ENCODE measurements at regions of chr1 and their contacts with region 1.

Region 1: GRCh38 chr1:204506961-204507387 is 9.2 kb upstream of the MDM4 start:
- DNase-seq: peak; percentile 91
- ATAC-seq: peak; percentile 72
- H3K4me3 Mint-ChIP-seq: peak overlapping the region; percentile 89
- H3K27ac Mint-ChIP-seq: peak overlapping the region; percentile 99
- H3K4me1 Mint-ChIP-seq: peaks cover 28% of the 10 kb centered on the region
- H3K27me3 Mint-ChIP-seq: peaks cover 2% of the 10 kb centered on the region

Region 2: GRCh38 chr1:203861379-203862184 is 645.4 kb before region 1 on chr1 and contains the start of gene SNRPE:
- CTCF ChIA-PET with region 1: no interaction called
- POLR2A ChIA-PET with region 1: no interaction called
- intact Hi-C with region 1: loop called in 1 of 2 experiments (anchors 2 kb)
- DNase-seq: peak; percentile 98
- ATAC-seq: peak; percentile 98
- H3K4me3 Mint-ChIP-seq: peak within 1 kb of the TSS; percentile 100
- H3K27ac Mint-ChIP-seq: peak within 1 kb of the TSS; percentile 99
- H3K4me1 Mint-ChIP-seq: peaks cover 8% of the 10 kb centered on the region
- H3K27me3 Mint-ChIP-seq: no peaks in the 10 kb centered on the region
- total RNA-seq, gene SNRPE: 211 to 416 TPM

Region 3: GRCh38 chr1:204363335-204364124 is 143.4 kb before region 1 on chr1:
- CTCF ChIA-PET with region 1: no interaction called
- POLR2A ChIA-PET with region 1: no interaction called
- intact Hi-C with region 1: loop called in 1 of 2 experiments (anchors 2 kb)
- DNase-seq: peak; percentile 87
- ATAC-seq: peak; percentile 81
- H3K4me3 Mint-ChIP-seq: peak overlapping the region; percentile 60
- H3K27ac Mint-ChIP-seq: peak overlapping the region; percentile 85
- H3K4me1 Mint-ChIP-seq: peaks cover 33% of the 10 kb centered on the region
- H3K27me3 Mint-ChIP-seq: peaks cover 2% of the 10 kb centered on the region

Region 4: DNA sequence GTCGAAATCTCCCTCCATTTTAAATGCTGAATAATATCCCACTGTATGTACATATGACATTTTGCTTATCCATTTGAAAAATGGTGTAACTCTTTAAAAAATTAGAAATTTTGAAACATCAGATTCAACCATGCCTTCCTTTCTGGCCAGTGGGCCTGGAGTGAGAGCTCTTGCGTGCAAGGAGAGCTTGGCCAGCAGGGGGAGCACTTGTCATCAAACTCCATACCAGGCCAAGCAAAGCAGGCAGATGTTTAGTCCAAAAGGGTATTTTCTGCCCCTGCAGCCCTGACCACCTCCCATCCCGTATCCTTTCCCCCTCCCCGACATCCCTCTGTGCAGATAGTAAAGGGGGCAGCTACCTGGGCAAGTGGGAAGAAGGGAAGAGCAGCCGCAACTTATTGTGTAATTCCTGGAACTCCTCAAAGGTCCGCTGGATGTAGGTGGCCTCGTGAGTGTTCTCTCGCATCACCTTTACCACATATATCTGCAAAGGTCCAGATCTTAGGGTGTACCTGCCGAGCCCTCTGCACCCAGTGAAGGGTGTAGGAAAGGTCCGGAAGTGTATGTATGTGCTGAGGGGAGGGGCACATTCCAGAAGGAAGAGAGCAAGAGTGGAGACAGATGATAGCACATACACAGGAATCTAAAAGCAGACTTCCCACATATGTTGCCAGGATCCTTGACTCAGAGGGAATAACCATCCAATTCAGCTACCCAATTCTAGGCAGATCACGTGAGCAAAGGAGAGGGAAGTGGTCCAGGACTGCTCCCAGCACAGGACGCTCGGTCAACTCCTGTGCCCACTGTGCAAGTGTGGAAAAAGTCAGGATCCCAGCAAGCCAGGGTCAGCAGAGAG is 75.4 kb before region 1 on chr1:
- CTCF ChIA-PET with region 1: interaction called, 910 read pairs
- POLR2A ChIA-PET with region 1: no interaction called
- intact Hi-C with region 1: loop called (anchors 1 kb)
- DNase-seq: peak; percentile 91
- ATAC-seq: peak; percentile 85
- H3K4me3 Mint-ChIP-seq: no peak overlapping the region
- H3K27ac Mint-ChIP-seq: peak overlapping the region; percentile 45
- H3K4me1 Mint-ChIP-seq: peaks cover 10% of the 10 kb centered on the region
- H3K27me3 Mint-ChIP-seq: no peaks in the 10 kb centered on the region

Region 5: GRCh38 chr1:204487256-204487615 is 19.7 kb before region 1 on chr1:
- CTCF ChIA-PET with region 1: interaction called, 47 read pairs
- POLR2A ChIA-PET with region 1: no interaction called
- intact Hi-C with region 1: no loop called
- DNase-seq: no peak
- ATAC-seq: no peak
- H3K4me3 Mint-ChIP-seq: no peak overlapping the region
- H3K27ac Mint-ChIP-seq: no peak overlapping the region
- H3K4me1 Mint-ChIP-seq: peaks cover 40% of the 10 kb centered on the region
- H3K27me3 Mint-ChIP-seq: no peaks in the 10 kb centered on the region

Region 6: GRCh38 chr1:205032508-205032907 is 525.5 kb after region 1 on chr1:
- CTCF ChIA-PET with region 1: no interaction called
- POLR2A ChIA-PET with region 1: no interaction called
- intact Hi-C with region 1: no loop called
- DNase-seq: no peak
- ATAC-seq: no peak
- H3K4me3 Mint-ChIP-seq: no peak overlapping the region
- H3K27ac Mint-ChIP-seq: no peak overlapping the region
- H3K4me1 Mint-ChIP-seq: no peaks in the 10 kb centered on the region
- H3K27me3 Mint-ChIP-seq: peaks cover 3% of the 10 kb centered on the region

Region 7: GRCh38 chr1:205750138-205751035 is 1243.4 kb after region 1 on chr1 and contains the start of gene NUCKS1:
- CTCF ChIA-PET with region 1: no interaction called
- POLR2A ChIA-PET with region 1: no interaction called
- intact Hi-C with region 1: loop called in 1 of 2 experiments (anchors 2 kb)
- DNase-seq: peak; percentile 98
- ATAC-seq: peak; percentile 81
- H3K4me3 Mint-ChIP-seq: peak within 1 kb of the TSS; percentile 87
- H3K27ac Mint-ChIP-seq: peak within 1 kb of the TSS; percentile 96
- H3K4me1 Mint-ChIP-seq: peaks cover 32% of the 10 kb centered on the region
- H3K27me3 Mint-ChIP-seq: no peaks in the 10 kb centered on the region
- total RNA-seq, gene NUCKS1: 189 to 260 TPM

Measured in activated CD4-positive, alpha-beta T cell treated with anti-CD3 and anti-CD28 coated beads for 36 hours (primary cell).